HCT116 (cell line): ENCODE measurements at regions of chr9 and their contacts with region 1.

Region 1: GRCh38 chr9:70413798-70414775 is at the start of gene KLF9:
- DNase-seq: peak; percentile 89
- ATAC-seq: peak; percentile 67
- H3K4me3 ChIP-seq: peak within 1 kb of the TSS; percentile 52 to 68
- H3K27ac ChIP-seq: peak within 1 kb of the TSS; percentile 54
- H3K4me1 ChIP-seq: peaks cover 29 to 66% of the 10 kb centered on the region in 2 experiments
- H3K27me3 ChIP-seq: no peaks in the 10 kb centered on the region
- CTCF ChIP-seq: no peak
- POLR2A ChIP-seq: no peak
- RAD21 ChIP-seq: no peak
- total RNA-seq, gene KLF9: 8.3 TPM

Region 2: DNA sequence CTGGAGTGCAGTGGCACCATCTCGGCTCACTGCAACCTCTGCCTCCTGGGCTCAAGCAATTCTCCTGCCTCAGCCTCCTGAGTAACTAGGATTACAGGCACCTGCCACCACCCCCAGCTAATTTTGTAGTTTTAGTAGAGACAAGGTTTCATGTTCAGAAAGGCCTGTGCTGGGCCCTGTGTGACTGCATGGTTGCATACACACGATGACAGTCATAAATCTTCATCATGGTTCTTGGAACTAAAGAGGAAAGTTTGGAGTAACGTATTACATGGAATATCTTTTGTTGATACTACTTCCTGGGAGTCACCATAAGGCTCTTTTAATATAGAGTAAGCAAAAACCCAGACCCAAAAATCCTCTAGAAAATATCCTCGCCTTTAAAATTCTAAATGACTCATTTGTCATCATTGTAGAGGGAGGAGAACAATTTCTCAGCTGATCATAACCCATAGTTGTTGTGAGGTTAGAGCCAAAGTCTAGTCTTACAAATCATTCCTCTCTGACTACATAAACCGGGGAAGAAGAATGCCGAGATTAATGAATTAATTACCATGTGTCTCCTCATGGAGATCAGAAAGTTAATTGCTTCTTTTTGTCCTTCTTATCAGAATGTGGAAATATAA is 46.7 kb before region 1 on chr9:
- CTCF ChIA-PET with region 1: no interaction called
- POLR2A ChIA-PET with region 1: no interaction called
- RAD21 ChIA-PET with region 1: no interaction called
- intact Hi-C with region 1: no loop called
- DNase-seq: no peak
- ATAC-seq: no peak
- H3K4me3 ChIP-seq: no peak overlapping the region
- H3K27ac ChIP-seq: no peak overlapping the region
- H3K4me1 ChIP-seq: no peaks in the 10 kb centered on the region
- H3K27me3 ChIP-seq: no peaks in the 10 kb centered on the region
- CTCF ChIP-seq: no peak
- POLR2A ChIP-seq: no peak
- RAD21 ChIP-seq: no peak

Region 3: DNA sequence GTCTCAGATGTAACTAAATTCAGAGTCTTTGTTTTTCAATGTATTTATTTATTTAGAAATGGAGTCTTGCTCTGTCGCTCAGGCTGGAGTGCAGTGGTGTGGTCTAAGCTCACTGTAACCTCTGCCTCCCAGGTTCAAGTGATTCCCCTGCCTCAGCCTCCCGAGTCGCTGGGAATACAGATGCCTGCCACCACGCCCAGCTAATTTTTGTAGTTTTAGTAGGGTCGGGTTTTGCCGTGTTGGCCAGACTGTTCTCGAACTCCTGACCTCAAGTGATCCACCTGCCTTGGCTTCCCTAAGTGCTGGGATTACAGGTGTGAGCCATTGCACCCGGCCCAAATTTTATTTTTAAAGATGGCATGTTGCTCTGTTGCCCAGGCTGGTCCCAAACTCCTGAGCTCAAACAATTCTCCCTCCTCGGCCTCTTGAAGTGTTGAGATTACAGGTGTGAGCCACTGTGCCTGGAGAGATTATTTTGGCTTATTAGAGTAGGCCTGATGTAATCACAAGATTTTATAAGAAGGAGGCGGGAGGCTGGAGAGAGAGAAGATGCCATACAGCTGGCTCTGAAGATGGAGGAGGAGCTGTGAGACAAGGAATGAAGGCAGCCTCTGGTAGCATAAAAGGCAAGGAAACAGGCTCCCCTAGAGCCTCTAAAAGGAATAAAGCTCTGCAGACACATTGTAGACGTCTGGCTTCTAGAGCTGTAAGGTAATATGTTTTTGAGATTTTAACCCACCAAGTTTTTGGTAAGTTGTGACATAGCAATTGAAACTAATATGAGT is 13.3 kb after region 1 on chr9:
- CTCF ChIA-PET with region 1: no interaction called
- POLR2A ChIA-PET with region 1: interaction called, 16 read pairs
- RAD21 ChIA-PET with region 1: no interaction called
- intact Hi-C with region 1: no loop called
- DNase-seq: no peak
- ATAC-seq: peak; percentile 49
- H3K4me3 ChIP-seq: no peak overlapping the region
- H3K27ac ChIP-seq: no peak overlapping the region
- H3K4me1 ChIP-seq: peaks cover 0 to 14% of the 10 kb centered on the region in 2 experiments; a peak in 3 of 4 replicates
- H3K27me3 ChIP-seq: no peaks in the 10 kb centered on the region
- CTCF ChIP-seq: no peak
- POLR2A ChIP-seq: no peak
- RAD21 ChIP-seq: no peak

Region 4: DNA sequence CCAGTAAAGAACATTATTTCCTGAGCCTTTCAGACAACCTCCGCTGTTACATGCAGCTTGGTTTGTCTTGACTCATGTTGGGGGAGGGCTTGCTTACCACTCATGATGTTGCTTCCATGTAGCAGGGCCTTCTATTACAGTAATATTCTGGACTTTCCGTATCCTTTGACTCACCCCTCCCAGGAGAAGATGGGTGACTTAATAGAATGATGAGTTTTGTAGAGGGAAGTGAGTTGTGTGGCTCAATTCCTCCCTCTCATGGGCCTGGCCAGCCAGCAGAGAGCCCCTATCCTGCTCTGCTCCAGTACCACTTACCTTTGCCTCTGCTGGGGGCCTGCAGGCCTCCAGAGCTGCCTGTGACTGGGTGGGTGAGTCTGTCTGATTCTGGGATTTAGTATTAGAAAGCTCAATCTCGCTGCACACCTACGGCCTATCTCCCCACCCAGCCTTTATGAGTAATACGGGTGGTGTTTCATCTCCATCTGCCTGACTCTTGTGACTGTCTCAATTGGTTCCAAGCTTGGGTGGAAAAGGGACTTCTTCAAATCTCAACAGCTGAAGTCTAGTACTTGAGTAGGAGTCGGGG is 53.0 kb after region 1 on chr9:
- CTCF ChIA-PET with region 1: no interaction called
- POLR2A ChIA-PET with region 1: no interaction called
- RAD21 ChIA-PET with region 1: no interaction called
- intact Hi-C with region 1: no loop called
- DNase-seq: no peak
- ATAC-seq: peak; percentile 44
- H3K4me3 ChIP-seq: no peak overlapping the region
- H3K27ac ChIP-seq: no peak overlapping the region
- H3K4me1 ChIP-seq: peaks cover 0 to 26% of the 10 kb centered on the region in 2 experiments; a peak in 1 of 4 replicates
- H3K27me3 ChIP-seq: no peaks in the 10 kb centered on the region
- CTCF ChIP-seq: no peak
- POLR2A ChIP-seq: no peak
- RAD21 ChIP-seq: no peak

Region 5: GRCh38 chr9:70602321-70603019 is 188.4 kb after region 1 on chr9:
- CTCF ChIA-PET with region 1: interaction called, 7 read pairs
- POLR2A ChIA-PET with region 1: interaction called, 4 read pairs
- RAD21 ChIA-PET with region 1: interaction called, 3 read pairs
- intact Hi-C with region 1: loop called (anchors 1 kb)
- DNase-seq: peak; percentile 65
- ATAC-seq: peak; percentile 98
- H3K4me3 ChIP-seq: no peak overlapping the region
- H3K27ac ChIP-seq: no peak overlapping the region
- H3K4me1 ChIP-seq: no peaks in the 10 kb centered on the region
- H3K27me3 ChIP-seq: no peaks in the 10 kb centered on the region
- CTCF ChIP-seq: peak; percentile 62 to 83 (median 73); a peak in 5 of 6 replicates
- POLR2A ChIP-seq: no peak
- RAD21 ChIP-seq: peak; percentile 92